Mammary epithelial cell (primary cell): ENCODE measurements at regions of chr15 and their contacts with region 1.

Region 1: DNA sequence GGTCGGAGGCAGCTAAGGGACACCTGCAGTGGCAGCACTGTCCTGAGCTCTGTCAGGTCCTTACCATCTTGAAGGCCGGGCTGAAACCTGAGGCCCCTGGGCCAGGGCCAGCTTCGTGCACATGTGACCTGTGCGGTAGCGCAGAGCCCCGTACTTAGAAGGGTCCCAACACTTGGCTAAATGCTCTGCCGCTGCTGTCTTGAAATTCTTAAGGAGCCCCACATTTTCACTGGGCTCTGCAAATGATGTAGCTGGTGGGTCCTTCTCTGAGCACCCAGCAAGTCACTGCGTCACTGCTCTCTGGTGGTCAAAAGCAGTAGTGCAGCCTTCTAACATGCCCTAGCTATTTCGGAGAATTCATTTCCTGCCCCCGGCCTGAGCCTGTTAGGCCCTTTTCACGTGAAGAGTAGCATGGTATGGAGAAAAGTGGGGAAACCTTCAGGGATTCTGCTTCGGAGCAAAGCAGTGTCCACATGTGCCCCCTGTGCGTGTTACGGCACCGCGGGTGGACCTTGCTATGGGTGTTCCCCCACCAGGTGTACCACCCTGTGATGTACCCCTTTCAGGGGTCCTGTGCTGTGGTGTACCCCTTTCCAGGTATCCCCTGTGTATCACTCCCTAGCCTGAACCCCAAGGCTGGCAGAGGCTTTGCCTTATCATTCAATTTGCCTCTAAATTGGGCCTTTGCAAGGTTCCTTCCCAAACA is 79.7 kb downstream of the TMEM266 start:
- DNase-seq: peak; percentile 55
- H3K4me3 ChIP-seq: no peak overlapping the region
- H3K27ac ChIP-seq: no peak overlapping the region
- H3K4me1 ChIP-seq: peaks cover 14% of the 10 kb centered on the region
- H3K27me3 ChIP-seq: no peaks in the 10 kb centered on the region
- CTCF ChIP-seq: peak; percentile 96 to 98

Region 2: DNA sequence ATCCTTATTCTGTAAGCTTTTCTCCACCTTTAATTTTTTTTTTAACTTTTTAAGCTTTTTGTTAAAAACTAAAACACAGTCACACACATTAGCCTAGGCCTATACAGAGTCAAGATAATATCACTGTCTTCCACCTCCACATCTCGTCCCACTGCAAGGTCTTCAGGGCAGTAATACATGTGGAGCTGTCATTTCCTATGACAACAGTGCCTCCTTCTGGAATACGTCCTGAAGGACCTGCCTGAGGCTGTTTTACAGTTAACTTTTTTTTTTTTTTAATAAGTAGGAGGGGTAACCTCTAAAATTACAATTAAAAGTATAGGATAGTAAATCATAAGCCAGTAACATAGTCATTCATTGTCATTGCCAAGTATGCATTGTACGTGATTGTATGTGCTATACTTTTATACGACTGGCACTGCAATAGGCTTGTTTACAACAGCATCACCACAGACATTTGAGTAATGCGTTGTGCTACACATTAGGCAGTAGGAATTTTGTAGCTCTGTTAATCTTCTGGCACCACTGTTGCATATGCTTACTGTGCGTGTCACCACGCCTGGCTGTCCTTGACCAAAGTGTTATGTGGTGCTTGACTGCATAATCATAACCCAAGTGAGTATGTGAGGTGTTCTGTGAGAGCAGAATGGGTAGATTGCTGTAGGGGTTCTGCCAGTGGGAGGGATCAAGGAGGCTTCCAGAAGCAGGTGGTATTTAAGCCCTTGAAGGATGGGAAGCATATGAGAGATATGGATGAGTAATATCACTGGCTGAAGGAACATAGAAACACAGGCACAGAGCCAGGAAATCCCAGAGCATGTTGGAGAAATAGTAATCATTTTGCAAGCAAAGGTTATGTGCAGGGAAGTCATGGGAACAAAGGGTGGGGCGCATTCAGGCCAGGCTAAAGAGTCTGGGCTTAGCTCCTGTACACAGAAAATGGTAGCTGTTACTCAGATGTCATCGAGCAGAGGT is 217.5 kb before region 1 on chr15:
- CTCF ChIA-PET with region 1: interaction called, 5 read pairs
- dilution Hi-C with region 1: no loop called
- in situ Hi-C with region 1: loop called in 1 of 2 experiments (anchors 25 kb)
- intact Hi-C with region 1: loop called (anchors 2 kb)
- DNase-seq: peak; percentile 78
- H3K4me3 ChIP-seq: no peak overlapping the region
- H3K27ac ChIP-seq: no peak overlapping the region
- H3K4me1 ChIP-seq: peaks cover 29% of the 10 kb centered on the region
- H3K27me3 ChIP-seq: no peaks in the 10 kb centered on the region
- CTCF ChIP-seq: peak; percentile 32 to 33

Region 3: GRCh38 chr15:75928680-75929608 is 210.6 kb before region 1 on chr15:
- CTCF ChIA-PET with region 1: interaction called, 5 read pairs
- dilution Hi-C with region 1: no loop called
- in situ Hi-C with region 1: loop called in 1 of 2 experiments (anchors 25 kb)
- intact Hi-C with region 1: no loop called
- DNase-seq: no peak
- H3K4me3 ChIP-seq: no peak overlapping the region
- H3K27ac ChIP-seq: no peak overlapping the region
- H3K4me1 ChIP-seq: peaks cover 11% of the 10 kb centered on the region
- H3K27me3 ChIP-seq: no peaks in the 10 kb centered on the region
- CTCF ChIP-seq: peak in 1 of 2 donors; percentile 25

Region 4: GRCh38 chr15:75947092-75947491 is 192.4 kb before region 1 on chr15:
- CTCF ChIA-PET with region 1: no interaction called
- dilution Hi-C with region 1: no loop called
- in situ Hi-C with region 1: loop called in 1 of 2 experiments (anchors 25 kb)
- intact Hi-C with region 1: loop called (anchors 2 kb)
- DNase-seq: peak; percentile 94
- H3K4me3 ChIP-seq: no peak overlapping the region
- H3K27ac ChIP-seq: peak overlapping the region; percentile 79
- H3K4me1 ChIP-seq: peaks cover 31% of the 10 kb centered on the region
- H3K27me3 ChIP-seq: no peaks in the 10 kb centered on the region
- CTCF ChIP-seq: no peak

Region 5: DNA sequence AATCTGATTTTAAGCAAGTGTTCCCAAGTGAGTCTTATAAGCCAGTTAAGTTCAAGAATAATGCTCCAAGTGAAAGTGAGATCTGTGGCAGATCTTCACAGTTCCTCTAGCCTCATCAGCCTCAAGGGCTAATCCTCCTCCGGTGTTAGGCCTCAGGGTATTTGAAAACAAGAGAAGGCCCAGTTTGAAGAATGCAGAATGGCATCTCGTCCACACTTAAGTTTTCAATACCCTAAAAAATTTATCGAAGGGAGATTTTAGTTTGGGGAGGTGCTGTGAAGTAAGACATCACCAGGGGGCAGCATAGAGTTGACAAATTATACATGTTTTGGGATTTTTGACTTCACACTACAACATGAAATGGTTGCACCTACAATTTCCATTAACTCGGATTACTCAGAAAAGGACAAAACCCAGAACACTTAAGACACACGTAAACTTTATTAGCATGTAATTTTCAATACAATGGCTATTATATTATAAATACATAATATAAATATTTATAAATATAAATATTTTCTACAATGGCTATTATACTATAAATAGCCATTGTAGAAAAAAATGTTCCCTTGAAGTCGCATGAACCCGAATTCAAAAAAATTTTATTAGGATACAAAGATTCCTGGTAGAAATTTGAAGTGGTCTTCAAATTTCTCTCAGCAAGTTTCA is 82.1 kb before region 1 on chr15:
- CTCF ChIA-PET with region 1: interaction called, 66 read pairs
- dilution Hi-C with region 1: no loop called
- in situ Hi-C with region 1: loop called (anchors 5 to 10 kb)
- intact Hi-C with region 1: loop called (anchors 1 kb)
- DNase-seq: peak; percentile 26
- H3K4me3 ChIP-seq: peak overlapping the region; percentile 30 to 61 (median 43)
- H3K27ac ChIP-seq: no peak overlapping the region
- H3K4me1 ChIP-seq: peaks cover 18% of the 10 kb centered on the region
- H3K27me3 ChIP-seq: peaks cover 9% of the 10 kb centered on the region
- CTCF ChIP-seq: peak; percentile 76

Region 6: GRCh38 chr15:76065267-76065666 is 74.3 kb before region 1 on chr15:
- CTCF ChIA-PET with region 1: interaction called, 28 read pairs
- dilution Hi-C with region 1: loop called (anchors 5 kb)
- in situ Hi-C with region 1: loop called in 1 of 2 experiments (anchors 5 kb)
- intact Hi-C with region 1: no loop called
- DNase-seq: no peak
- H3K4me3 ChIP-seq: no peak overlapping the region
- H3K27ac ChIP-seq: no peak overlapping the region
- H3K4me1 ChIP-seq: no peaks in the 10 kb centered on the region
- H3K27me3 ChIP-seq: peaks cover 7% of the 10 kb centered on the region
- CTCF ChIP-seq: no peak

Region 7: GRCh38 chr15:76098685-76099084 is 40.8 kb before region 1 on chr15:
- CTCF ChIA-PET with region 1: no interaction called
- dilution Hi-C with region 1: no loop called
- in situ Hi-C with region 1: no loop called
- intact Hi-C with region 1: no loop called
- DNase-seq: no peak
- H3K4me3 ChIP-seq: no peak overlapping the region
- H3K27ac ChIP-seq: no peak overlapping the region
- H3K4me1 ChIP-seq: no peaks in the 10 kb centered on the region
- H3K27me3 ChIP-seq: no peaks in the 10 kb centered on the region
- CTCF ChIP-seq: no peak

Region 8: GRCh38 chr15:76514292-76514691 is 374.8 kb after region 1 on chr15:
- CTCF ChIA-PET with region 1: no interaction called
- dilution Hi-C with region 1: no loop called
- in situ Hi-C with region 1: no loop called
- intact Hi-C with region 1: no loop called
- DNase-seq: no peak
- H3K4me3 ChIP-seq: no peak overlapping the region
- H3K27ac ChIP-seq: no peak overlapping the region
- H3K4me1 ChIP-seq: no peaks in the 10 kb centered on the region
- H3K27me3 ChIP-seq: no peaks in the 10 kb centered on the region
- CTCF ChIP-seq: no peak